ENCODE measurements at regions of chr1 and their contacts with region 1.

Region 1: GRCh38 chr1:212630158-212630900 is 21.8 kb downstream of the ATF3 start:
- DNase-seq: peak; percentile 45 to 75
- ATAC-seq: peak; percentile 69 to 91
- H3K4me3 ChIP-seq: no peak overlapping the region
- H3K27ac ChIP-seq: no peak overlapping the region
- H3K4me1 ChIP-seq: no peaks in the 10 kb centered on the region
- CTCF ChIP-seq: peak; percentile 54
- EP300 ChIP-seq: no peak
- POLR2A ChIP-seq: no peak
- RAD21 ChIP-seq: peak; percentile 45 to 57

Region 2: DNA sequence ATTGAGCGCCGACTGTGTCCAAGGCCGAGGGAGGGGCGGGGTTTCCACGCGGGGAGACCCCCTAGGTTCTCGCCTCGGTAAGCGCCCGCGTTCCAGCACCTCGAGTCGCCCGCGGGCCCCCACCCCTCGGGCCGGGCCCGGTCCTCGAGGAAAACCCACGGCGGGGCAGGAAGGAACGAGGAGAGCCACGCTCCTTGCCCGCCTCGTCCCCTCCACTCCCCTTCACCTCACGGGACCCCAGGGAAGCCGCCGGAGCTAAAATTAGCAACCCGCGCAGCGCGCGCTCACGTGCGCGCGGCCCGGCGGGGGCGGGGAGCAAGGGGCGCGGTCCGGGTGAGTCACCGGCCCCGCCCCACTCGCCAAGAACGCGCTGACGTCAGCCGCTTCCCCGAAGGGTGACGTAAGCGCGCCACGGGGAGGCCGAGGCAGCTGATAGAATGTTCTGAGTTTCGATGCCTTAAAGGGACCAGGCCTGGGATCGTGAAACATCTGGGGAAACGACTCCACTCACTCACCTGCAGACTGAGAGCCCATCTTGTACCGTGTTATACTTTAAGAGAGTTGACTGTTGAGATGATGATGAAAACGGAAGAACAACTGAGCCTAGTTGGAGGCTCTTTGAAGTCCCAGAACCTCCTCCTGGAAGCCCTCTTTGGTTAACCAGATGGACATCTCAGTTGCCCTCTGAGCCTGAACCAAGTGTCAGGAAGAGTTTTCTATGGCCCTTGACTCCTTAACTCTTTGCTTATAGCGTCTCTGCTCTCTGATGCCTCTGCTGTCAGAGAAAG is 71.4 kb before region 1 on chr1:
- CTCF ChIA-PET with region 1: no interaction called
- POLR2A ChIA-PET with region 1: no interaction called
- DNase-seq: peak; percentile 82 to 95
- ATAC-seq: peak; percentile 91 to 92
- H3K4me3 ChIP-seq: peak overlapping the region; percentile 69
- H3K27ac ChIP-seq: peak overlapping the region; percentile 89 to 95
- H3K4me1 ChIP-seq: peaks cover 16% of the 10 kb centered on the region
- CTCF ChIP-seq: no peak
- EP300 ChIP-seq: no peak; a peak in 1 of 5 replicates
- POLR2A ChIP-seq: no peak; the same call in 1 of the 2 replicates
- RAD21 ChIP-seq: peak in 1 of 2 experiments; percentile 20; a peak in 1 of 5 replicates

Region 3: GRCh38 chr1:212618501-212619405 is 11.6 kb before region 1 on chr1:
- CTCF ChIA-PET with region 1: interaction called, 26 read pairs
- POLR2A ChIA-PET with region 1: interaction called, 3 read pairs
- DNase-seq: no peak
- ATAC-seq: no peak
- H3K4me3 ChIP-seq: no peak overlapping the region
- H3K27ac ChIP-seq: no peak overlapping the region
- H3K4me1 ChIP-seq: no peaks in the 10 kb centered on the region
- CTCF ChIP-seq: no peak
- EP300 ChIP-seq: no peak
- POLR2A ChIP-seq: no peak
- RAD21 ChIP-seq: no peak

Region 4: GRCh38 chr1:212641956-212642355 is 11.6 kb after region 1 on chr1:
- CTCF ChIA-PET with region 1: interaction called, 14 read pairs
- POLR2A ChIA-PET with region 1: no interaction called
- DNase-seq: no peak
- ATAC-seq: no peak
- H3K4me3 ChIP-seq: no peak overlapping the region
- H3K27ac ChIP-seq: no peak overlapping the region
- H3K4me1 ChIP-seq: no peaks in the 10 kb centered on the region
- CTCF ChIP-seq: no peak
- EP300 ChIP-seq: no peak
- POLR2A ChIP-seq: no peak
- RAD21 ChIP-seq: no peak

Region 5: DNA sequence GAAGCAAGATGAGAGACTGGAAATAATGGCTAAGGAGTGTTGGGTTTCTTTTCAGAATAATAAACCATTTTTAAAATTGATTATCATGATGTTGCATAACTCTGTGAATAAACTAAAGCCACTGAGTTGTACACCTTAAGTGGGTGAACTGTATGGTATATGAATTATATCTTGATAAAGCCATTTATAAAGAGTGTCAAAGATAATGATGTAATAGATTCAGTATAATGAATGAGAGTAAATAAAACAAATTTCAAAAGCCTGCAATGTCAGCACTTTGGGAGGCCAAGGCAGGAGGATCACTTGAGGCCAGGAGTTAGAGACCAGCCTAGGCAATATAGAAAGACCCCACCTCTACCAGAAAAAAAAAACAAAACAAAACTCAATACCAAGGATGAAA is 144.9 kb after region 1 on chr1:
- CTCF ChIA-PET with region 1: no interaction called
- POLR2A ChIA-PET with region 1: no interaction called
- DNase-seq: no peak
- ATAC-seq: no peak
- H3K4me3 ChIP-seq: no peak overlapping the region
- H3K27ac ChIP-seq: peak overlapping the region; percentile 45 to 52; a peak in 1 of 6 replicates
- H3K4me1 ChIP-seq: peaks cover 11% of the 10 kb centered on the region
- CTCF ChIP-seq: no peak
- EP300 ChIP-seq: no peak
- POLR2A ChIP-seq: no peak
- RAD21 ChIP-seq: no peak